ENCODE measurements at regions of chrX and their contacts with region 1.

Region 1: DNA sequence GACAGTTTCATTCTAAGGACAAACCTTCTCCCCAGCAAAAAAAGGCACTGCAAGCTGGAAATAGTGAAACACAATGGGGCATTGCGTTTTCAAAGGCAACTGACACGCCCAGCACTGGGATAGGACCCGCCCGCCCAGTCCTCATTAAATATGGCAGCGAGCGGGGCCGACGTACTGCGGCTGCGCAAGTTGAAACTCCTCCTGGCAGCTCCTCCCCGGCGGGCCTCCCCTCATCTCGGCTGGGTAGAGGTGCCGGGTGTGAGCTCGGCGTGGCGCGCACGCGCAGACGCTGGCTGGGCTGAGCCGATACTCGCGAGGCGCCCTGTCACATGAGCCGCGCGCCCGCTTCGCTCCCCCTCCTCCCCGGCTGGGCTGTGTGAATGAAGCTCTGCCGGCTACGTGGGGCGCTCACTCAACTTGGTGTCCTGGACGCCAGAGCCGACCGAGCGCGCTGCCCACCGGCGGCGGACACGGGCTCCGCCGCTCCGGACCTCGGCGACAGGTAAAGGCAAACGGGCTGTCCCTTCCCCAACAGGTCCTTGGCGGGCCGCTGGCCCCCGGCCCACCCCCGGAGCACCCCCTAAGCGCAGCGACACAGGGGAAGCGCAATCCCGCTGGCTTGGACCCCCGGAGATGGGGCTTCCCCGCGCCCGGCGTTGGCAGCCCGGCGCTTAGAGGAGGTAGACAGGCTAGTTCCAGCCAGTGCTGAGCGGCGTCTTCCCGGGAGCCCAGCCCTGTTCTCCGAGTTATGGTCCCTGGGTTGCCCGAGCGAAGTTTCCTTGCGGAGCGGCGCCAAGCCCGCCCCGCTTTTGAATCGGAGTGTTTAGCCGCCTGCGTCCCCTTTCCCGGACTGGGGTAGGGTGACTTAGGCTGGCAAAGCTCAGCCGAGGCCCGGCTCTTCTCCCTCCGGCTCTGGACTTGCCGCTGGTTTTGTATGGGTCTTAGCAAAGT is at the start of gene CLCN5:
- DNase-seq: peak; percentile 71
- ATAC-seq: peak; percentile 98
- H3K4me3 ChIP-seq: peak within 1 kb of the TSS; percentile 67
- H3K27ac ChIP-seq: peak within 1 kb of the TSS; percentile 14; the same call in 1 of the 2 replicates
- H3K4me1 ChIP-seq: no peaks in the 10 kb centered on the region
- H3K27me3 ChIP-seq: no peaks in the 10 kb centered on the region
- CTCF ChIP-seq: no peak
- EP300 ChIP-seq: no peak
- POLR2A ChIP-seq: peak; percentile 75
- RAD21 ChIP-seq: no peak
- polyA plus RNA-seq, gene CLCN5: 0.33 to 0.43 TPM

Region 2: DNA sequence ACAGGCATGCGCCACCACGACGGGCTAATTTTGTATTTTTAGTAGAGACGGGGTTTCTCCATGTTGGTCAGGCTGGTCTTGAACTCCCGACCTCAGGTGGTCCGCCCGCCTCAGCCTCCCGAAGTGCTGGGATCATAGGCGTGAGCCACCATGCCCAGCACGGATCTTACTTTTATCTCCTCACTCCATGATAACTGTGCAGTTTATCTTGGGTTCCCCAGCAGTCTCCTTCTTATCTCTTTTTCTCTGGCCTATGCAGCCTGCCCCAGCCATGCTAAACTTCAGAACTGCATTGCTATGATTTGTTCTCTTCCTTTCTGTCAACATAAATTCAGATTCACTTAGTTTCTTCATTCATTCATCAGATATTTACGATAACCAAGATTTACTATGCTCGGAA is 249.2 kb before region 1 on chrX:
- CTCF ChIA-PET with region 1: no interaction called
- POLR2A ChIA-PET with region 1: no interaction called
- RAD21 ChIA-PET with region 1: no interaction called
- SMC1A ChIA-PET with region 1: no interaction called
- in situ Hi-C with region 1: no loop called
- intact Hi-C with region 1: no loop called
- DNase-seq: no peak
- ATAC-seq: no peak
- H3K4me3 ChIP-seq: no peak overlapping the region
- H3K27ac ChIP-seq: no peak overlapping the region
- H3K4me1 ChIP-seq: no peaks in the 10 kb centered on the region
- H3K27me3 ChIP-seq: no peaks in the 10 kb centered on the region; a peak in 1 of 4 replicates
- CTCF ChIP-seq: no peak
- EP300 ChIP-seq: no peak
- POLR2A ChIP-seq: no peak
- RAD21 ChIP-seq: no peak

Region 3: GRCh38 chrX:49878834-49879659 is 43.5 kb before region 1 on chrX and contains the start of gene USP27X:
- CTCF ChIA-PET with region 1: interaction called, 72 read pairs
- POLR2A ChIA-PET with region 1: no interaction called
- RAD21 ChIA-PET with region 1: interaction called, 16 read pairs
- SMC1A ChIA-PET with region 1: interaction called, 22 read pairs
- in situ Hi-C with region 1: no loop called
- intact Hi-C with region 1: loop called (anchors 5 kb)
- DNase-seq: peak; percentile 27
- ATAC-seq: peak; percentile 96
- H3K4me3 ChIP-seq: peak within 1 kb of the TSS; percentile 55; the same call in 1 of the 2 replicates
- H3K27ac ChIP-seq: no peak within 1 kb of the TSS; the same call in 1 of the 2 replicates
- H3K4me1 ChIP-seq: no peaks in the 10 kb centered on the region; the same call in 1 of the 2 replicates
- H3K27me3 ChIP-seq: no peaks in the 10 kb centered on the region
- CTCF ChIP-seq: peak; percentile 34 to 43 (median 39); a peak in 4 of 6 replicates
- EP300 ChIP-seq: no peak
- POLR2A ChIP-seq: peak; percentile 58; the same call in 1 of the 2 replicates
- RAD21 ChIP-seq: no peak
- polyA plus RNA-seq, gene USP27X: 0.31 to 0.33 TPM

Region 4: GRCh38 chrX:49910344-49910743 is 12.2 kb before region 1 on chrX:
- CTCF ChIA-PET with region 1: interaction called, 25 read pairs
- POLR2A ChIA-PET with region 1: no interaction called
- RAD21 ChIA-PET with region 1: interaction called, 4 read pairs
- SMC1A ChIA-PET with region 1: interaction called, 3 read pairs
- in situ Hi-C with region 1: no loop called
- intact Hi-C with region 1: no loop called
- DNase-seq: no peak
- ATAC-seq: peak; percentile 71
- H3K4me3 ChIP-seq: no peak overlapping the region
- H3K27ac ChIP-seq: no peak overlapping the region
- H3K4me1 ChIP-seq: no peaks in the 10 kb centered on the region; the same call in 1 of the 2 replicates
- H3K27me3 ChIP-seq: no peaks in the 10 kb centered on the region
- CTCF ChIP-seq: no peak
- EP300 ChIP-seq: no peak
- POLR2A ChIP-seq: no peak
- RAD21 ChIP-seq: no peak

Region 5: DNA sequence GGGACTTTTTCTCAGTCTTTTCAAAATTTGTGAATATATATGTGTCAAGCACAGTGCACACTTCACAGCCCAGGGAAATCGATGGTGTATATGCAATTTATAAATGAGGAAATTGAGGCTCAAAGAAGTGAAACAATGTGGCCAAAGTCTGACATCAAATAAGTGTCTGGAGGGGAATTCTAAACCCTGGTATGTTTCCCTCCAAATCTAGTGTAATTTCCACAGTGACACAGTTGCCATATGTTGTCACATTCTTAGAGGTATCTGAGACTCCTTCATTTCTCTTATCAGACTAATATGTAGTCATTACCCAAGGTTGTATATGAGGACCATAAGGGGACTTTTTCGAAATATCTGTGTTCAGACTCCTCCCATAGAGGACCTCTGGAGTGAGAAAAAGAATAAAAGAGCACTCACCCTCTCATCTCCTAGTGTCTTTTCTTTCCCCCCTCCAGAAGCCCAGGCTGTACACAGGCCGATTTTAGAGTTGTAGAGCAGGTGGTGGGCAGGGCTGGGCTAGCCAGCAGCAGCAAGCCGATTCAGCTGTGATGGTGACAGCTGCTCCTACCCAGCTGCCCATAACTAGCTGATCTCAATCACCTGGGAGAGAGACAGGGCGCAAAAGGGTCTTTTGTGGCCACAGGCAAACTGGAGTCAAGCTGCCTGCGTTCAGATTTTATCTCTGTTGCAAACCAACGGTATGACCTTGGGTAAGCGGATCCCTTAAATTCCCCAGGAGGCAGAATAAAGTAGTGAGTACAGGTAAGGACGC is 54.9 kb after region 1 on chrX:
- CTCF ChIA-PET with region 1: no interaction called
- POLR2A ChIA-PET with region 1: interaction called, 5 read pairs
- RAD21 ChIA-PET with region 1: interaction called, 4 read pairs
- SMC1A ChIA-PET with region 1: interaction called, 10 read pairs
- in situ Hi-C with region 1: no loop called
- intact Hi-C with region 1: no loop called
- DNase-seq: peak; percentile 1
- ATAC-seq: peak; percentile 82
- H3K4me3 ChIP-seq: no peak overlapping the region
- H3K27ac ChIP-seq: no peak overlapping the region; the same call in 1 of the 2 replicates
- H3K4me1 ChIP-seq: no peaks in the 10 kb centered on the region
- H3K27me3 ChIP-seq: no peaks in the 10 kb centered on the region
- CTCF ChIP-seq: no peak
- EP300 ChIP-seq: no peak
- POLR2A ChIP-seq: no peak
- RAD21 ChIP-seq: no peak

Region 6: DNA sequence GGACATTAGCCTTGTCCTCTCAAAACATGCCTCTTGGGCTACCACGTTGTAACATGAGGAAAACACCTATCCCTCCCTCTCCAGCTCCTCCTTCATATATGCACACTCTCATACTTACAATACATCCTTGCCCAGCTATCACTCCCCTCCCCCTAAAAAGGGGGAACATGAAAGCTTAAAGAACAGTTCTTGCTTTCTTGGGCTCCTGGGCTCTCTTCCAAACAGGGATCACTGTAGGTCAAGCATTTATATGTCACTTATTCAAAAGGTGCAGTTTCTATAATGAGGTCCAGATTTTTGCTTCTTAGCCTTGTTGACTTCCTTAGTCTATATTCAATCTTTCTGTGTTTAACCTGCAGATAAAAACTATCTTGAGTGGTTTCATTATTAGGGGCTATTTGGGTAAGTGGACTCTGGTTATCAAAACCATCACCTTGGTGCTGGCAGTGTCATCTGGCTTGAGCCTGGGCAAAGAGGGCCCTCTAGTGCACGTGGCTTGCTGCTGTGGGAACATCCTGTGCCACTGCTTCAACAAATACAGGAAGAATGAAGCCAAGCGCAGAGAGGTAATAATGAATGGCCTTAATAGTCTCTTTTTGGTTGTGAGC is 158.8 kb after region 1 on chrX:
- CTCF ChIA-PET with region 1: interaction called, 11 read pairs
- POLR2A ChIA-PET with region 1: no interaction called
- RAD21 ChIA-PET with region 1: interaction called, 9 read pairs
- SMC1A ChIA-PET with region 1: interaction called, 4 read pairs
- in situ Hi-C with region 1: no loop called
- intact Hi-C with region 1: loop called (anchors 5 kb)
- DNase-seq: no peak
- ATAC-seq: peak; percentile 43; the same call in 2 of the 3 replicates
- H3K4me3 ChIP-seq: no peak overlapping the region
- H3K27ac ChIP-seq: no peak overlapping the region
- H3K4me1 ChIP-seq: no peaks in the 10 kb centered on the region
- H3K27me3 ChIP-seq: no peaks in the 10 kb centered on the region
- CTCF ChIP-seq: peak; percentile 29 to 38 (median 35); a peak in 3 of 6 replicates
- EP300 ChIP-seq: no peak
- POLR2A ChIP-seq: no peak
- RAD21 ChIP-seq: peak; percentile 62